ENCODE measurements at regions of chr14 and their contacts with region 1.

Region 1: GRCh38 chr14:38021861-38022260 is 185.8 kb upstream of the SSTR1 start:
- DNase-seq: no peak
- H3K4me3 ChIP-seq: no peak overlapping the region
- H3K27ac ChIP-seq: no peak overlapping the region
- H3K4me1 ChIP-seq: no peaks in the 10 kb centered on the region
- H3K27me3 ChIP-seq: no peaks in the 10 kb centered on the region
- CTCF ChIP-seq: no peak

Region 2: GRCh38 chr14:38047195-38047902 is 25.5 kb after region 1 on chr14:
- CTCF ChIA-PET with region 1: no interaction called
- POLR2A ChIA-PET with region 1: interaction called, 11 read pairs
- intact Hi-C with region 1: no loop called
- DNase-seq: no peak
- H3K4me3 ChIP-seq: no peak overlapping the region
- H3K27ac ChIP-seq: no peak overlapping the region
- H3K4me1 ChIP-seq: no peaks in the 10 kb centered on the region; the same call in 1 of the 2 replicates
- H3K27me3 ChIP-seq: no peaks in the 10 kb centered on the region
- CTCF ChIP-seq: no peak